ENCODE measurements at regions of chr7 and their contacts with region 1.

Region 1: DNA sequence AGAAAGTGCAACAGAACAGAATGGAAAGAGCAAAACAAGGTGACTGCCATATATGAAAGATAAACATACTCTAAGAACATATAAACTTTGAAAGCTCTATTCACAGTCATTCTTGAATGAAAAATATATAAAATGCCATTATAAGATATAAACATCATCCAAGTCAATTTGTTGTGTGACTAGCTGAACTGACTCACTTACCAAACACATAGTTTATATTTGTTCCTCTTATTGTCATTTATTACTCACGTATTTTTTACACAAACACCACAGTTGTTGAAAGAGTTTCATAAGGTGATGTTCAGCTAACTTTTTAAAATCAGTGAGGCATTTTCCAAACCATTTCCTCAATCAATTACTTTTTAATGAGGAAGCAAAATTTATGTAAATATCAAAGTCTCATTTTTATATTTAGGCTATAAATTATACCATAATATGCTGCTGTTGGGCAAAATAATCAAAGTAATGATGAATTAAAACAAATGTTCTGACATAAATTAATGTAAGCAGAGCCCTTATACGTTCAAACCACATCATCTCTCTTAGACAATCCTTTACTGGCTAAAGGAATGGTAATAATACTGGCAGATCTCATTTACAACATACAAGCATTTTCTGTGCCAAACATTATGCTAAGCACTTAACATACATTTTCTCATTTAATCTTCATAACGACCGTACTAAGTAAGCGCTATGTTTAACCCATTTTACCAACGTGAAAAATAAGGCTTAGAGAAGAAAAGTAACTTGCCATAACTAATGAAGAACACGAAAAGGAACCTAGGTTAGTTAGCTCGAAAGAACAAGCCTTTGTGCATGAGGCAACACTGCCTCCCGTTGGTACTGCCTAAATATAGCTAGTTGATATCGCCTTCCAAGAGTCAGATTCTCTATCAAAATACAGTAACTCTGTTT is 7.3 kb downstream of the LRRN3 start:
- DNase-seq: peak; percentile 79
- ATAC-seq: peak; percentile 69
- H3K4me3 Mint-ChIP-seq: peak overlapping the region; percentile 59
- H3K27ac Mint-ChIP-seq: peak overlapping the region; percentile 76
- H3K4me1 Mint-ChIP-seq: peaks cover 59% of the 10 kb centered on the region
- H3K27me3 Mint-ChIP-seq: no peaks in the 10 kb centered on the region

Region 2: DNA sequence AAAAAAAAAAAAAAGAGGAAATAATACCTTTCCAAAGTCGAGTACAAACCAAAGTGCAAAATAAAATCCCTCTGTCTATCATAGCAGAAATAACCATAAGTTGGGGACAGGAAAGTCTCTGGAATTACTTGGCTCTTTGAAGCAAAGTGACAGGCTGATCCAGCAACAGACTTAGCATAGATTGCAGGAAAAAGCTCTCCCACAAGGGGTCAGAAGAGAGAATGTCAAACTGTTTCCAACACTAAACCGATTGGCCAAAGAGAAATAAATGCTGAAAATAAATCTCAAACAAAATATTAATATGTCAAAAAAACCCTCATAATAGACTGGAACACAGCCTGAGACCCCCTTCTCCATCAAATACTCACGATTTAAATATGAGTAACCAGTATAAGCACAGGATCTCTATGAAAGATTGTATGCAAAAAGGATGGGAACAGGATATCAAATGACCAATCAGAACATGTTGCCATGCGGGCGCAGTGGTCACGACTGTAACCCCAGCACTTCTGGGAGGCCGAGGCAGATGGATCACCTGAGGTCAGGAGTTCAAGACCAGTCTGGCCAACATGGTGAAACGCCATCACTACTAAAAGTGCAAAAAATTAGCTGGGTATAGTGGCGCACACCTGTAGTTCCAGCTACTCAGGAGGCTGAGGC is 1008.0 kb before region 1 on chr7:
- CTCF ChIA-PET with region 1: interaction called, 3 read pairs
- POLR2A ChIA-PET with region 1: no interaction called
- intact Hi-C with region 1: loop called (anchors 1 to 5 kb)
- DNase-seq: no peak
- ATAC-seq: no peak
- H3K4me3 Mint-ChIP-seq: no peak overlapping the region
- H3K27ac Mint-ChIP-seq: no peak overlapping the region
- H3K4me1 Mint-ChIP-seq: no peaks in the 10 kb centered on the region
- H3K27me3 Mint-ChIP-seq: peaks cover 3% of the 10 kb centered on the region

Region 3: GRCh38 chr7:110595690-110596325 is 502.5 kb before region 1 on chr7:
- CTCF ChIA-PET with region 1: interaction called, 5 read pairs
- POLR2A ChIA-PET with region 1: no interaction called
- intact Hi-C with region 1: loop called in 1 of 2 experiments (anchors 1 kb)
- DNase-seq: no peak
- ATAC-seq: no peak
- H3K4me3 Mint-ChIP-seq: no peak overlapping the region
- H3K27ac Mint-ChIP-seq: no peak overlapping the region
- H3K4me1 Mint-ChIP-seq: no peaks in the 10 kb centered on the region
- H3K27me3 Mint-ChIP-seq: no peaks in the 10 kb centered on the region

Region 4: GRCh38 chr7:110988890-110989501 is 109.3 kb before region 1 on chr7:
- CTCF ChIA-PET with region 1: no interaction called
- POLR2A ChIA-PET with region 1: no interaction called
- intact Hi-C with region 1: no loop called
- DNase-seq: no peak
- ATAC-seq: no peak
- H3K4me3 Mint-ChIP-seq: no peak overlapping the region
- H3K27ac Mint-ChIP-seq: no peak overlapping the region
- H3K4me1 Mint-ChIP-seq: peaks cover 18% of the 10 kb centered on the region
- H3K27me3 Mint-ChIP-seq: no peaks in the 10 kb centered on the region

Region 5: GRCh38 chr7:111050875-111051416 is 47.3 kb before region 1 on chr7:
- CTCF ChIA-PET with region 1: no interaction called
- POLR2A ChIA-PET with region 1: no interaction called
- intact Hi-C with region 1: no loop called
- DNase-seq: no peak
- ATAC-seq: no peak
- H3K4me3 Mint-ChIP-seq: no peak overlapping the region
- H3K27ac Mint-ChIP-seq: no peak overlapping the region
- H3K4me1 Mint-ChIP-seq: peaks cover 25% of the 10 kb centered on the region
- H3K27me3 Mint-ChIP-seq: no peaks in the 10 kb centered on the region

Region 6: DNA sequence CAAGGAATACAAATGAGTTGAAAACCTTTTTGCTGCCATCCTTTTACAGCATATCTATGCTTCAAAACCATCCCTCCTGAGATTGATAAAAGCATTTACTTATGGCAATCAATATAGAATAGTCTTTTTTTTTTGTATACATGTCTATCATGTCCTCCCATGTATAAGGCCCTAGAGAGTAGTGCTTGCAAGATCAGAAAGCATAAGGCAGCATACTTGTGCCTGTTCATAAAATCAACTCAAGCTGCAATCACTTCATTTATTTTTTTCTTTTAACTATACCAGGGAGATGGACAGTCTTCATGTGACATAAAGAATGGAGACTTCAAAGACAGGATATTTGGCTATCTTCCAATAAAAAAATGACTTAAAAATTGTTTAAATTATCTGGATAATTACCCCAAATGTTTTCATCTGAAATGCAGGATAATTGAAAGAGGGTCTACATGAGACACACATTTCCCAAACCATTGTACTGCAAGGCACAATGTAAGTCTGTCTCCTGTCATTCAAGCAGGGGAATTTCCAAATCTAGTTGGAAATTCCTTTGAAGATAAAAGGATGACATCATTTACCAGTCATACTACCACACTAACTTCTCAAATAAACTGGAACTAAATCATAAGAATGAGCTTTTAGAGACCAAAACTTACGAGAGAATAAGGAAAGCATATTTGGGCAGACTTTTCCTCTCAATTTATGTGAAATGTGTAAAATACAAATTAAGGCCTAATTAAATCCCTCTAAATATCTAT is 15.2 kb after region 1 on chr7:
- CTCF ChIA-PET with region 1: interaction called, 11 read pairs
- POLR2A ChIA-PET with region 1: no interaction called
- intact Hi-C with region 1: no loop called
- DNase-seq: no peak
- ATAC-seq: peak; percentile 75
- H3K4me3 Mint-ChIP-seq: peak overlapping the region; percentile 21
- H3K27ac Mint-ChIP-seq: peak overlapping the region; percentile 89
- H3K4me1 Mint-ChIP-seq: peaks cover 42% of the 10 kb centered on the region
- H3K27me3 Mint-ChIP-seq: no peaks in the 10 kb centered on the region